ENCODE measurements at regions of chr4 and their contacts with region 1.

Region 1: DNA sequence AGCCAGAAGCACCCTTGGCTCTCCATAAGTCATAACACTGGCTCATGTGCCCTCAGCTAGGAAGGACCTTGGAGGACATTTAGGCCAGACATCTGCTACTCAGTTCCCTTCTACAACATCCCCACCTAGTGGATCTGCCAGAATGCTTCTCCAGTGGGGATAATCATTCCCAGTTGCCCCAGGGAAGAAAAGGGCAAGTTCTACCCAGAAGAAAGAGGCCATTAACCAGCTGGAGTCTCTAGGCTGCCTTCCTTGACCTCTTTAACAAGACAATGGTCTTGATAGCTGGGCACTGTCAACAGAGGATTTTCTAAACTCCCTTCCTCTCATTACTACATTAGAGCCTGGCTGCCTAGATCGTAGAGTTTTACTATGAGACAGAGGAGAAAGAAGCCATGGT is 42.0 kb downstream of the LGI2 start:
- DNase-seq: no peak
- ATAC-seq: peak in 3 of 4 donors; percentile 35 to 68 (median 44)
- H3K4me3 ChIP-seq: no peak overlapping the region
- H3K27ac ChIP-seq: no peak overlapping the region
- H3K4me1 ChIP-seq: peaks cover 0 to 24% (median 6%) of the 10 kb centered on the region in 12 donors
- H3K27me3 ChIP-seq: no peaks in the 10 kb centered on the region
- CTCF ChIP-seq: peak; percentile 12 to 49 (median 33)
- POLR2A ChIP-seq: no peak

Region 2: DNA sequence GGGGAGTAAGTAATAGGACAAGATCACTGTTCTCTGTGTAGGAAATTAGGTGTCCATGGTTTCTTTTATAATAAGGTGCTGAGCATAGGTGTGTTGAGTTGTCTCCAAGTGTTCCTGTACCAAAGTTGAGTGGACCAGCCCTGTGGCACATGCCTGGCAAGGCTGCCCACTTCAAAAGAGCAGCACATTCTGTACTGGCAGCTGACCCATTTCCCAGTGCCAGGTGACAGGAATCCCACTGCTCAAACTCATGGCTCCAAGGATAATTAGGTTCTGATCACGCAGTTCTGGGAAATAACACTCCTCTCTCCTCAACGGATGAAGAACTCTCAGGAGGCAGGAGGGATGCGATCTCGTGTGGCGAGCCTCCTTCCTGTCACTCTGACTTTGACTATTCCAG is 54.8 kb after region 1 on chr4:
- intact Hi-C with region 1: loop called in 2 of 10 experiments (anchors 5 kb)
- DNase-seq: no peak
- ATAC-seq: peak in 1 of 4 donors; percentile 58
- H3K4me3 ChIP-seq: no peak overlapping the region
- H3K27ac ChIP-seq: no peak overlapping the region
- H3K4me1 ChIP-seq: no peaks in the 10 kb centered on the region
- H3K27me3 ChIP-seq: no peaks in the 10 kb centered on the region
- CTCF ChIP-seq: no peak
- POLR2A ChIP-seq: no peak

Region 3: GRCh38 chr4:25098964-25099891 is 110.5 kb after region 1 on chr4:
- intact Hi-C with region 1: no loop called
- DNase-seq: peak; percentile 78 to 89 (median 87)
- ATAC-seq: peak; percentile 79 to 92 (median 90)
- H3K4me3 ChIP-seq: no peak overlapping the region
- H3K27ac ChIP-seq: peak overlapping the region; percentile 40 to 87 (median 79)
- H3K4me1 ChIP-seq: peaks cover 0 to 37% (median 26%) of the 10 kb centered on the region in 12 donors
- H3K27me3 ChIP-seq: no peaks in the 10 kb centered on the region
- CTCF ChIP-seq: no peak
- POLR2A ChIP-seq: no peak